Heart right ventricle (tissue), 16 donors: ENCODE measurements at regions of chr22 and their contacts with region 1.

Region 1: DNA sequence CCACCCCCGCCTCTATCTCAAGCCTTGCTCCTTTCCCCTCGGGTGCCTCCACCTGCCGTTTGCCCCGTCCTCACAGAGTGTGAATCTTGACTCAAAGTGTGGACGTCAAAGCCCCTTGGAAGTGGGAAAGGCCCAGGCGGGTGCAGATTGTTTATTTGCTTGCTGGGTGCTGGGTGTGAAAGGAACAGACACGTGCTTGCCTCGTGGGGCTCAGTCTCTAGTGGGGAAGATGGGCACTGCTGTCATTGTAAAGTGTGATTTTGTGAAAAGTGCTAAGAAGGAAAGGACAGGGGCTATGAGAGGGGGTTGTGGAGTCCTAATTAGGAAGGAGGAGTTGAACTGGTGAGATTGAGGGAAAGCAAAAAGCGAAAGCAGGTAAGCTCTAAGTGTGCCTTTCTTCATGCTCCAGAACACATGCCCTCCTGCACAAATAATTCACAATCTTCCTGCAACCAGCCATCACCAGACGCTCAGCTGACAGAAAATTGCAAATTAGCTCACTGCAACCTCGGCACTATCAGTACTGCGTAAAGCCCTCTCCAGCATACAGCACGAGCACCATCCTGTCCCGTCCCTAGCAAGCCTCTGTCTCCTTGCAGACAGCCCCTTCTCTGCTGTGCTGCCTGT is 9.7 kb upstream of the GCAT start:
- DNase-seq: no peak
- ATAC-seq: no peak
- H3K4me3 ChIP-seq: no peak overlapping the region
- H3K27ac ChIP-seq: no peak overlapping the region
- H3K4me1 ChIP-seq: peaks cover 0 to 14% (median 10%) of the 10 kb centered on the region in 9 donors
- H3K27me3 ChIP-seq: peaks cover 0 to 9% (median 0%) of the 10 kb centered on the region in 7 donors
- CTCF ChIP-seq: no peak

Region 2: DNA sequence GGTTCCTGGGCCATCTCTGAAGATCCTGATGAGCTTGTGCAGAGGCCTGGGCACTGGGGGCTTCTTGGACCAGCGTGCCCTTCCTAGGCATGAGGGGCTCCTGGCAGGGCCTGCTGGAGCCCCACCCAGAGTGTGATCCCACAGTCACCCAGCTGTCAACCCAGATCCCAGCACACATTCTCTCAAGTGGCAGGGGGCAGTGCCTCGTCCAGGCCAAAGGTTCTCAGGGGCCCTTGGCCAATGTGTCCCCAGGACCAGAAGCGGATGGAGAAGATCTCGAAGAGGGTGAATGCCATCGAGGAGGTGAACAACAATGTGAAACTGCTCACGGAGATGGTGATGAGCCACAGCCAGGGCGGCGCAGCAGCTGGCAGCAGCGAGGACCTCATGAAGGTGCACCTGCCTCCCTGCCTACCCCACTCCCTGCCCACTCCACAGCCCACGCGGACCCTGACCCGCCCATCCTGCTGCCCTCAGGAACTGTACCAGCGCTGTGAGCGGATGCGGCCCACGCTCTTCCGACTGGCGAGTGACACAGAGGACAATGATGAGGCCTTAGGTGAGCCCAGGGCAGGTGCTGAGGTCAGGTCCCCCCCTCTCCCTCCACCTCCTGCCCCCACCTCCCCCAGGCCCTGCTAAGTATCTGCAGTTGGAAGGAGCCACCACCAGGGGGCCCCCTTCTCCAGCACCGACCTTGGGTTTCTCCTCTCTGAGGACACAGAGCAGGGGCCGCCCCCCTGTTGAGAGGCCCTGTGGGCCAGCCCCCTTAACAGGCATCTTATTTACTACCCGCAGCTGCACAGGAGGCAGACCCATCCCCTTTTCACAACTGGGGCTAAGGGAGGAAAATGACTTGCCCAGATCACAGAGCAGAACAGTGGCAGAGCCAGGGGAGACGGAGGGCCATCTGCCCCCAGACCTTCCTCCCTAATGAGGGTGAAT is 174.6 kb before region 1 on chr22:
- intact Hi-C with region 1: loop called in 2 of 10 experiments (anchors 10 kb)
- DNase-seq: peak; percentile 60 to 72
- ATAC-seq: peak; percentile 45 to 66 (median 60)
- H3K4me3 ChIP-seq: no peak overlapping the region
- H3K27ac ChIP-seq: peak overlapping the region in 5 of 10 donors; percentile 6 to 58 (median 26)
- H3K4me1 ChIP-seq: peaks cover 15 to 36% (median 29%) of the 10 kb centered on the region in 9 donors
- H3K27me3 ChIP-seq: no peaks in the 10 kb centered on the region
- CTCF ChIP-seq: peak; percentile 80 to 90 (median 88)

Region 3: DNA sequence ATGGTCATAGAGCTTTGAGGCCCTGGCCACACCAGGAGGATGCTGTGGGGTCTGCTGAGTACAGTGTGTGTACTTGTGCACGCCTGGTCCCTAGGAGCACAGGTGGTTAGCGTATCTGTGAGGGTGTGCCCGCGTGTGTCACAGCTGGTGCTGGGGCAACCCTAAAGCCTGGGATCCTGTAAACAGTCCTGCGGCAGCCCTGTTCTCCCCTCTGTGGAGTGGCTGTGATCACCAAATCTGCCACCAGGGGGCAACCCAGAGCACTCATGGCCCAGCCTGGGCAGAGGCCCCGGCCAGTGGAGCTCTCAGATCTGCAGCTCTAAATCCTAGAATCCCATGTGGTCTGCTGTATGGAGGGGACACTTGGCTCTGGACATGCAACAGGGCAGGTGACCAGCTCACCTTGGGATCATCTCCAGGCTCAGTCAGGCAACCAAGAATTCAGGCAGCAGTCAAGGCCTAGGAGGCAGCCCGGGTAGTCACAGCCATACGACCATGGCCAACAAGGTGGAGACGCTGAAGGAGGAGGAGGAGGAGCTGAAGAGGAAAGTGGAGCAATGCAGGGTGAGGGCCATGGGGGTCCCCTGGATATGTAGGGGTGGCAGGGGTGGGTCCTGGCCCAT is 154.7 kb before region 1 on chr22:
- intact Hi-C with region 1: loop called in 8 of 10 experiments (anchors 2 to 10 kb)
- DNase-seq: peak; percentile 86 to 90
- ATAC-seq: peak; percentile 76 to 93 (median 86)
- H3K4me3 ChIP-seq: no peak overlapping the region
- H3K27ac ChIP-seq: no peak overlapping the region
- H3K4me1 ChIP-seq: peaks cover 0 to 44% (median 19%) of the 10 kb centered on the region in 9 donors
- H3K27me3 ChIP-seq: peaks cover 0 to 12% (median 0%) of the 10 kb centered on the region in 7 donors
- CTCF ChIP-seq: peak; percentile 91 to 97 (median 95)

Region 4: DNA sequence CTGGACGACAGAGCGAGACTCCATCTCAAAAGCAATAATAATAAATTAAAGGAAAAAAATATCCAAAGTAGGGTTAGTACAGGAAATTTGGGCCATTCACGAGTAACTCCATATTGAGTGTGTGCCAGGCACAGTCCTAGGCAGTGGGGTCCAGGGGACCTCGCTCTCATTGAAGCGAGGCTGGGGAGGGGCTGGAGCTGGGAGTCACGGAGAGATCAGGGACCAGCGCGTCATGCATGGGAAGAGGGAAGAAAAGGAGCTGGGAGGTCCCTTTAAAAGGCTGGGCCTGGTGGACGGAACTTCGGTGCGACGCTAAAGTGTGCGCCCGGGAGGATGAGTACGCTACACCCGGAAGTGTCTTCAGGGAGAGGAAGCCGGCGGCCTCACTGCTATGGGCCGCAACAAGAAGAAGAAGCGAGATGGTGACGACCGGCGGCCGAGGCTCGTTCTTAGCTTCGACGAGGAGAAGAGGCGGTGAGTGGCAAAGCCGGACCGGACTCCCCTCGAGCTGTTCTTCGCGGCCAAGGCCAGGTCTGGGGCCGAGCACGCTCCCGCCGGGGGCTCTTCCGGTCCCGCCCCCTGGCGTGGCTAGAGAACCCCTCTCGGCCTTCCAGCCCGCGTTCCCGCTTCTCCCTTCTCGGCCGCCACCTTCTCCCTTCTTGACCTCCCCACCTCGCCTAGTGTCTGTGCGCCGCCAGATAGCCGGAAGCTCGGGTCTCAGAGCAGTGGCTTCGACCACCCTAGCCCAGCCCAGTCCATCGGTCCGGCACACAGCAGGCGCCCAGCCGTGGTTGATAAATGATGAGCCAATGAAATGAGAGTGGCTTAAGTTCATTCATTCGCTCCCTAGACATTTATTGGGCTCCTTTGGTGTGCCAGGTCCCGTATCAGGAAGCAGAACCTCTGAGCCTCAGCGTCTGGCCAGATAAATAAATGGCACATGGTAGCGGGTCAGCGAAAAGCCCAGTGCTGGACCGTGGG is 111.7 kb before region 1 on chr22 and contains the start of gene NOL12:
- intact Hi-C with region 1: loop called in 1 of 10 experiments (anchors 10 kb)
- DNase-seq: peak; percentile 78 to 80
- ATAC-seq: peak; percentile 90 to 96 (median 92)
- H3K4me3 ChIP-seq: peak within 1 kb of the TSS; percentile 64 to 96 (median 85)
- H3K27ac ChIP-seq: peak within 1 kb of the TSS; percentile 69 to 95 (median 90)
- H3K4me1 ChIP-seq: peaks cover 10 to 27% (median 21%) of the 10 kb centered on the region in 9 donors
- H3K27me3 ChIP-seq: no peaks in the 10 kb centered on the region
- CTCF ChIP-seq: peak in 4 of 9 donors; percentile 3 to 24 (median 11)
- total RNA-seq, gene NOL12: 10.8 to 16.8 (median 12.7) TPM